CD8-positive, alpha-beta T cell (primary cell): ENCODE measurements at regions of chr16 and their contacts with region 1.

Region 1: GRCh38 chr16:28291873-28292660 is at the start of gene SBK1:
- DNase-seq: peak; percentile 68 to 94 (median 84)
- ATAC-seq: peak; percentile 90
- H3K4me3 ChIP-seq: peak within 1 kb of the TSS; percentile 82 to 92
- H3K4me3 Mint-ChIP-seq: peak within 1 kb of the TSS; percentile 94
- H3K27ac ChIP-seq: peak within 1 kb of the TSS; percentile 56 to 75
- H3K27ac Mint-ChIP-seq: peak within 1 kb of the TSS; percentile 93
- H3K4me1 ChIP-seq: peaks cover 74% of the 10 kb centered on the region
- H3K4me1 Mint-ChIP-seq: peaks cover 67% of the 10 kb centered on the region
- H3K27me3 ChIP-seq: no peaks in the 10 kb centered on the region
- H3K27me3 Mint-ChIP-seq: no peaks in the 10 kb centered on the region
- CTCF ChIP-seq: no peak
- total RNA-seq, gene SBK1: 16.5 to 17.1 TPM

Region 2: DNA sequence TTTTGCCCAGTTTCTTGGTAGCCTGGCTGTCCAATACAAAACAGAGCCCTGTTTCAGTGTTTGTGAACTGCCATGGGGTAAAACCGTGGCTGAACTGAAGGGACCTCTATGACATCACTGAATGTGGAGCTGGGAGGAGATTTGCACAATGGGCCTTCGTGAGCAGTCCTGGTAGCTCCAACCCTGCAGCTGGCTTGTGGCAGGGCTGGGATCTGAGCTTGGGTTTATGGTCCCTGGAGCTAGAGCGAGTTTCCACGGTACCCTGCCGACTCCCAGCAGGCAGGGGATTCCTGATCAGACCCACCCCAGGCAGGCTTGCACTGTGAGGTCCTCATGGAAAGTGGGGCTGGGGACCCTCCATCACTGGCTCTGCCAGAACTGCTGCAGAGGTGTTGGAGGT is 475.5 kb before region 1 on chr16:
- CTCF ChIA-PET with region 1: no interaction called
- POLR2A ChIA-PET with region 1: no interaction called
- intact Hi-C with region 1: no loop called
- DNase-seq: no peak
- ATAC-seq: no peak
- H3K4me3 ChIP-seq: no peak overlapping the region
- H3K4me3 Mint-ChIP-seq: no peak overlapping the region
- H3K27ac ChIP-seq: no peak overlapping the region
- H3K27ac Mint-ChIP-seq: no peak overlapping the region
- H3K4me1 ChIP-seq: no peaks in the 10 kb centered on the region
- H3K4me1 Mint-ChIP-seq: no peaks in the 10 kb centered on the region
- H3K27me3 ChIP-seq: no peaks in the 10 kb centered on the region
- H3K27me3 Mint-ChIP-seq: peaks cover 23% of the 10 kb centered on the region
- CTCF ChIP-seq: no peak

Region 3: DNA sequence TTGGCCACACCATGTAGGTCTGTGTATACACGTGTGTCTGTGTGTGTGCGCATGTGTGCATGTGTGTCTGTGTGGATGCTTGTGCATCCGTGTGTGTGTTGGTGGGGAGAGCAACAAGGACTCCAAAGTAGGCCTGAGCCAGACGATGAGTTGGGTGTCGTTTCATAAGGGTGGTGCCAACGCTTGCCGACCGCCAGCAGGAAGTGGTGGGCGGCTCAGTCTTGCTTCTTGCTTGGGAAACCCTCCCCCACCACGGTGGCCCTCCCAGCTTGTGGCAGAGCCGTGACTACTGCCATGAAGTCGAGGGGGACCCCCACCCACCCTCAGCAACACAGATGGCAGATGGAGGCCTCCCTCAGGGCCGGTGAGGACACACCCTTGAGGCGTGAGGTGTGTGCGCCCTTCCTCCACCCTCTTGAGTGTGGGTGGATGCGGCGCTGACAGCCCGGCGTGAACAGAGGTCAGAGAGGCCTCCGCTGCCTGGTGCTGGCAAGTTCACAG is 17.8 kb after region 1 on chr16:
- CTCF ChIA-PET with region 1: interaction called, 431 read pairs
- POLR2A ChIA-PET with region 1: interaction called, 123 read pairs
- intact Hi-C with region 1: loop called (anchors 1 kb)
- DNase-seq: peak; percentile 72 to 97 (median 92)
- ATAC-seq: peak; percentile 88
- H3K4me3 ChIP-seq: peak overlapping the region; percentile 0 to 48
- H3K4me3 Mint-ChIP-seq: peak overlapping the region; percentile 54
- H3K27ac ChIP-seq: peak overlapping the region; percentile 70 to 83
- H3K27ac Mint-ChIP-seq: peak overlapping the region; percentile 95
- H3K4me1 ChIP-seq: peaks cover 75% of the 10 kb centered on the region
- H3K4me1 Mint-ChIP-seq: peaks cover 76% of the 10 kb centered on the region
- H3K27me3 ChIP-seq: no peaks in the 10 kb centered on the region
- H3K27me3 Mint-ChIP-seq: no peaks in the 10 kb centered on the region
- CTCF ChIP-seq: no peak

Region 4: DNA sequence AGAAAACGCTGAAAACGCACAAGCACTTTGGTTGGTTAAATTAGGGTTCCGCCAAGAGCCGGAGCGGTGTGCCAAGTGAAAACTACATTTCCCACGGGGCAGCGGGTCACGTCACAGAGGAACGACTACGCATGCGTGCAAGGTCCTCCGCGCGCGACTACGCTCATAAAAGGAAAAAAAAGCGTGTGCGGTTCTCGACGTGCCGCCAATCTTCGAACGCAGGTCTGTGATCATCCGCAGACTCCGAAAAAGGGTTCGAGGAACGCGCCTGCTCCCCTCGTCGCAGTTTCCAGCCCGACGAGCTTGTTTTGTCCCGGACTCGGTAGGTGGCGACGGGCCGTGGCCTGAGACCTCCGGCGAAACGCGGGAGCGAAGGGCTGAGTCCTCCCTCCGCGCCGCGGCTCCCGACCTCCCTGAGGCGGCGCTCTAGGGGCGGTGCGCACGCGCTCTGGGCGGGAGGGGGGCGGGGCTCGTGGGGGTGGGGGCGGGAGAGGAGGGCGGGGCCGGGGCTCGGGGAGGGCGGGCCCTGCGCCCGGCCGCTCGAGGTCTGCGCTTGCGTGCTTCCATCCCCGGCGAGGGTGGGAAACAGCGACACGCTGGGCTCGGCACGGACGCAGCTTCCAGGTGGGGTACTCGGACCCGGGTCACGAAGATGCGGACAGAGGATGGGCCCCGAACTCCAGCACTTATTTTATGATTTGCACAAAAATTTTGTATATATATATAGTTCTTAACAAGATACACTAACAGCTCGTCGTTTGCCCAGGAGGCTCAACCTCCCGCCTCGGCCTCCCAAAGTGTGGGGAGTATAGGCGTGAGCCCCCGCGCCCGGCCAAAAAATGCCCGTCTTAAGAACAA is 261.9 kb after region 1 on chr16 and contains the start of gene SGF29:
- CTCF ChIA-PET with region 1: no interaction called
- POLR2A ChIA-PET with region 1: no interaction called
- intact Hi-C with region 1: loop called in 1 of 2 experiments (anchors 10 kb)
- DNase-seq: peak; percentile 86 to 97 (median 93)
- ATAC-seq: peak; percentile 93
- H3K4me3 ChIP-seq: peak within 1 kb of the TSS; percentile 87 to 99
- H3K4me3 Mint-ChIP-seq: peak within 1 kb of the TSS; percentile 92
- H3K27ac ChIP-seq: peak within 1 kb of the TSS; percentile 95 to 98
- H3K27ac Mint-ChIP-seq: peak within 1 kb of the TSS; percentile 98
- H3K4me1 ChIP-seq: peaks cover 18% of the 10 kb centered on the region
- H3K4me1 Mint-ChIP-seq: peaks cover 36% of the 10 kb centered on the region
- H3K27me3 ChIP-seq: no peaks in the 10 kb centered on the region
- H3K27me3 Mint-ChIP-seq: no peaks in the 10 kb centered on the region
- CTCF ChIP-seq: no peak
- total RNA-seq, gene SGF29: 41.1 to 44.5 TPM